ENCODE measurements at regions of chr3 and their contacts with region 1.

Region 1: DNA sequence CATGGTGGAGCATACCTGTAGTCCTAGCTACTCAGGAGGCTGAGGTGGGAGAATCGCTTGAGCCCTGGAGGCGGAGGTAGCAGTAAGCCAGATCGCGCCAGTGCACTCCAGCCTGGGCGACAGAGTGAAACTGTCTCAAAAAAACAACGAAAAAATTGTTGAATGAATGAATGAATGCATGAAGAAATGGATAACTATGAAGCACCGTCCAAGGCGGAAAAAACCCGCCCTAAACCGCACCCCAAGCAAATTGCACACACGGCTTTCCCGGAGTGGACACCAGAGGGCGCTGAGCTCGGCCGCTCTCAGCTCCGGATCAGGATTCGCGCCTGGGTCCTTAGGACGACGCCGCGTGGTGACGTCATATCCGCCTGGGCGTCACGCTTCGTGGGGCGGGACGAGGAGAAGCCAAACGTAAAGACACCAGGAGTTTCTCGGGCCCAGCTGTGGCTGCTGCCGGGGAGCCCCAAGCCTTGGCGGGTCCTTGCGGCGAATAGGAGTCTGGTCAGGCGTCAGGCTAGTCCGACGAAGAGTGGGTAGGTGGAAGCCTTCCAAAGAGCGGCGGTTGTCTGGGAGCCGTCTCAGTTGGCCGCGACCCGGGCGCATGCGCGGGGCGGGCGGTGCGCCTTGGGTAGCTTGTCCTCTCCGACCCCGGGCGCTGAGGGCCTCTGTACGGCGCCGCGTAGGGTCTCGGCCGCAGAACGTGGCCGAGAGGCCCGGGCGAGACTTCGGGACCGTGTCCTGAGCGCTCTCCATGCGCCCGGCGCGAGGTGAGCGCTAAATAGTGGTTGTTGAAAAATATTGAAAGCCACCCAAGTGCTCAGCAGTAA is at the starts of genes HTD2 and RPP14:
- DNase-seq: peak; percentile 97 to 100 (median 99)
- ATAC-seq: peak; percentile 89
- H3K4me3 ChIP-seq: peak within 1 kb of the TSS; percentile 85 to 99
- H3K4me3 Mint-ChIP-seq: peak within 1 kb of the TSS; percentile 97
- H3K27ac ChIP-seq: peak within 1 kb of the TSS; percentile 91 to 100
- H3K27ac Mint-ChIP-seq: peak within 1 kb of the TSS; percentile 99
- H3K4me1 ChIP-seq: peaks cover 18% of the 10 kb centered on the region
- H3K4me1 Mint-ChIP-seq: peaks cover 44% of the 10 kb centered on the region
- H3K27me3 ChIP-seq: no peaks in the 10 kb centered on the region
- H3K27me3 Mint-ChIP-seq: peaks cover 14% of the 10 kb centered on the region
- CTCF ChIP-seq: peak; percentile 93
- total RNA-seq, gene HTD2: 6.4 to 8.9 TPM
- total RNA-seq, gene RPP14: 18.3 to 20.4 TPM

Region 2: GRCh38 chr3:57597122-57597923 is 708.8 kb before region 1 on chr3 and contains the start of gene ARF4:
- CTCF ChIA-PET with region 1: no interaction called
- POLR2A ChIA-PET with region 1: interaction called, 5 read pairs
- intact Hi-C with region 1: loop called in 1 of 2 experiments (anchors 1 kb)
- DNase-seq: peak; percentile 98 to 100 (median 99)
- ATAC-seq: peak; percentile 87
- H3K4me3 ChIP-seq: peak within 1 kb of the TSS; percentile 92 to 95
- H3K4me3 Mint-ChIP-seq: peak within 1 kb of the TSS; percentile 99
- H3K27ac ChIP-seq: peak within 1 kb of the TSS; percentile 93 to 95
- H3K27ac Mint-ChIP-seq: peak within 1 kb of the TSS; percentile 100
- H3K4me1 ChIP-seq: peaks cover 42% of the 10 kb centered on the region
- H3K4me1 Mint-ChIP-seq: peaks cover 58% of the 10 kb centered on the region
- H3K27me3 ChIP-seq: no peaks in the 10 kb centered on the region
- H3K27me3 Mint-ChIP-seq: no peaks in the 10 kb centered on the region
- CTCF ChIP-seq: no peak
- total RNA-seq, gene ARF4: 72.7 to 73.5 TPM

Region 3: DNA sequence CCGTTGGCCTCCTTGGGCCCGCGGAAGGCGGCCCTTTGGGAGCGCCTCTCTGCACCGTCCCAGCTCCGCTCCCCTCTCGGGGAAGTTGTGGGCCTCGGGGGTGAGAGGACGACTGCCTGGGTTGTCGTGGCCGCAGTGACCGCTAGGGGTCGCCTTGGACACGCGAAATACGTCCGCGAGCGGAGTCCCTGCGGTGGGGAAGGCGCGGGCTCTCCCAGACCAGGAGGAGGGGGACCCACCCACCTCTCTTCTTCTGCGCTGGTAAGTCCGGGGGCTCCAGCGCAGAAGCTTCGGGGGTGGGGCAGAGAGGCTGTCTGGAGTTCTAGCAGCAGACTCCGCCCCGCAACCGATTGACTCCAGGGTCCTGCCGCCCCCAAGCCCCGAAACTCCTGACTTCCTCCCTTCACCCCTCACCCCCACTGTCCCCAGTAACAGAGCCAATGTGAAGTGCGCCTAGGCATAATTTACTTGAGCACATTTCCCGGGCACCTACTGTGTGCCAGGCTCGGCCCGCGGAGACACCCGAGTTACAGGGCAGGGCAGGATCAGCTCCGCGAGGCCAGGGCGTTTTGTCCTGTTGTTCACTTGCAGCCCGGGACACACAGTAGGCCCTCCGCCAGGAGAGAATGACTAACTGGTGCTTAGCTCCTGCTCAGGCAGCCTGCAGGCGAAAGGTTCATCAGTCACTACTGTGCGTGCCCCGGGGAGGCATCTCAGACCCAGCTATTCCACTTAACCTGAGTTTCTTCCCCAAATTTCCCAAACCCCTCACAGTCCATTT is 128.2 kb before region 1 on chr3:
- CTCF ChIA-PET with region 1: interaction called, 4 read pairs
- POLR2A ChIA-PET with region 1: no interaction called
- intact Hi-C with region 1: loop called in 1 of 2 experiments (anchors 2 kb)
- DNase-seq: peak; percentile 74 to 95 (median 87)
- ATAC-seq: peak; percentile 94
- H3K4me3 ChIP-seq: peak overlapping the region; percentile 34 to 48
- H3K4me3 Mint-ChIP-seq: peak overlapping the region; percentile 69
- H3K27ac ChIP-seq: no peak overlapping the region
- H3K27ac Mint-ChIP-seq: no peak overlapping the region
- H3K4me1 ChIP-seq: peaks cover 14% of the 10 kb centered on the region
- H3K4me1 Mint-ChIP-seq: peaks cover 13% of the 10 kb centered on the region
- H3K27me3 ChIP-seq: peaks cover 0 to 2% of the 10 kb centered on the region in 2 experiments
- H3K27me3 Mint-ChIP-seq: peaks cover 9% of the 10 kb centered on the region
- CTCF ChIP-seq: peak; percentile 79

Region 4: DNA sequence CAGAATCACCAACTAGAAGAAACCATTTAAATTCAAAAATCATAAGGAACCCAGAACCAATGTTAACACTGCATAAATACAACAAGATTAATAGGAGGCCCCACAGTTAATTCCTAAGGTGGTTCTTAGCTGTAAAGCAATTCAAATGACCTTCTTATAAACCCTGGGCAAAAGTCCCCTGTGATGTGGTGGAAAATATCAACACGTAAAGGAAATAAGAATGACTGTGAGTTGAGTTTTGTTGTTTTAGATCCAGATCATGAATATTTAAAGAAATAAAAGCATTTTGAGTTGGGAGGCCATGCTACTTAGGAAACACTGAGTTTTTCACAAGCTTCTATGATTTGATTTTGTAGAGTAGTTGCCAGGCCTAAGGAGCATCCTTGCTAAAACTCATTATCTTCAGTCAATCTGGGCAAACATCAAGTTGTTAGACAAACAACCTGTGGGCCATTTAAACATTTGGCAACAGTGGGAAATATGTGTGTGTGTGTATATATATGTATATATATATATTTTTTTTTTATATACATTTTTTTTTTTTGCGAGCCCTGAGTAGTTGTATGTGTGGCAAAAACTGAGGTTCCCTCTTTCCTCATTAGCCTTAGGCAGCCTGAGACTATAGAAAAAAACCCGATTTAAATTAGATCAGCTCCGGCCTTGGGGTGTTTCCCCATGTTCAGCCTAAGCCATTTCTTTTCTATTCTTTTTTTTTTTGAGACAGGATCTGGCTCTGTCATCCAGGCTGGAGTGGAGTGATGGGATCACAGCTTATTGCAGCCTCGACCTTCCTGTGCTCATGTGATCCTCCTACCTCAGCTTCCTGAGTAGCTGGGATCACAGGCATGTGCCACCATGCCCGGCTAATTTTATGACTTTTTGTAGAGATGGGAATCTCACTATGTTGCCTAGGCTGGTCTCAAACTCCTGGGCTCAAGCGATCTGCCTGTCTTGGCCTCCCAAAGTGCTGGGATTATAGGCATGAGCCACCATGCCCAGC is 18.6 kb after region 1 on chr3:
- CTCF ChIA-PET with region 1: interaction called, 12 read pairs
- POLR2A ChIA-PET with region 1: interaction called, 3 read pairs
- intact Hi-C with region 1: loop called in 1 of 2 experiments (anchors 1 kb)
- DNase-seq: peak in 1 of 9 experiments; percentile 26
- ATAC-seq: peak; percentile 50
- H3K4me3 ChIP-seq: no peak overlapping the region
- H3K4me3 Mint-ChIP-seq: no peak overlapping the region
- H3K27ac ChIP-seq: no peak overlapping the region
- H3K27ac Mint-ChIP-seq: peak overlapping the region; percentile 52
- H3K4me1 ChIP-seq: peaks cover 7% of the 10 kb centered on the region
- H3K4me1 Mint-ChIP-seq: peaks cover 13% of the 10 kb centered on the region
- H3K27me3 ChIP-seq: no peaks in the 10 kb centered on the region
- H3K27me3 Mint-ChIP-seq: no peaks in the 10 kb centered on the region
- CTCF ChIP-seq: no peak

Region 5: GRCh38 chr3:58414538-58415197 is 108.6 kb after region 1 on chr3:
- CTCF ChIA-PET with region 1: interaction called, 16 read pairs
- POLR2A ChIA-PET with region 1: no interaction called
- intact Hi-C with region 1: loop called in 1 of 2 experiments (anchors 1 kb)
- DNase-seq: peak in 6 of 9 experiments; percentile 23 to 72 (median 42)
- ATAC-seq: peak; percentile 91
- H3K4me3 ChIP-seq: no peak overlapping the region
- H3K4me3 Mint-ChIP-seq: no peak overlapping the region
- H3K27ac ChIP-seq: no peak overlapping the region
- H3K27ac Mint-ChIP-seq: no peak overlapping the region
- H3K4me1 ChIP-seq: no peaks in the 10 kb centered on the region
- H3K4me1 Mint-ChIP-seq: no peaks in the 10 kb centered on the region
- H3K27me3 ChIP-seq: no peaks in the 10 kb centered on the region
- H3K27me3 Mint-ChIP-seq: no peaks in the 10 kb centered on the region
- CTCF ChIP-seq: peak; percentile 60

Region 6: DNA sequence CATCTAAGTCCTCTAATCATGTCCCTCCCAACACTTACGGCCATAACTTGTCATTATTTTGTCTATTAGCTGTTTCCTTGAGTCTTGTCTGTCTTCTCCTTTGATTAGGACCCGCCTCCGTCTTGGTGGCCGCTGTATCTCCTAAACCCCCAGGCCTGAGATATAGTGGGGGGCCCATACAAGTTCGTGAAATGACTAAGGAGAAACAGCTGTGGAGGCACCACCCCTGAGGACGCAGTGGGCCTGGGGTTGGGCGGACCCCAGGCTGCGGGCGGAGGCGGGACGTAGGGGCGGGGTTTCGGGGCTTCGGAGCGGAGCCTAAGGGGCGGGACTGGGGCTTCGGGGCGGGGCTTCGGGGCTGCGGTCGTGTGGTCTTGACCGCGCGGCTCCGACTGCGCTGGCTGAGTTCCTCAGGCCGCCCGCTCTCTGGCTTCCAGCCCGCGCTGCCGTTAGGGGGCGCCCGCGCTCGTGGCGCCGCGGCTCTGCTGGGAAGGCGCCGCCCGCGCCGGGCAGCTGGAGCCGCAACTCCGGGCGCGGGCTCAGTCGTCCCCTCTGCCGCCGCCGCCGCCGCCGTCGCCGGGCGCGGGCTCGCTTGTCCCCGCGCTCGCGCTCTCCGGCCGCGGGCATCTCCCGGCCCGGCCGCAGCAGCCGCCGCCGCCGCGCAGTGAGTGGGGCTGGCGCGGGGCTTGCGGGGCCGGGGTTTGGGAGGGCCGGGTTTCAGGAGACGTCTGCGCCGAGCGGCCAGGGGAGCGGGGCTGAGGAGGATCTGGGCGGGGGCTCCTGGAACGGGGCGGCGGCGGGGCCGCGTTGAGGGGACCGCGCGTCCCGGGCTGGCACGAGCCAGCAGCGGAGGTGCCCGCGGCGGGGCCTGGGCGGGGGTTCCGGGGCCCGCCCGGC is 185.7 kb after region 1 on chr3 and contains the start of gene KCTD6:
- CTCF ChIA-PET with region 1: interaction called, 30 read pairs
- POLR2A ChIA-PET with region 1: interaction called, 17 read pairs
- intact Hi-C with region 1: loop called (anchors 1 kb)
- DNase-seq: peak; percentile 74 to 93 (median 85)
- ATAC-seq: peak; percentile 81
- H3K4me3 ChIP-seq: peak within 1 kb of the TSS; percentile 72 to 88
- H3K4me3 Mint-ChIP-seq: peak within 1 kb of the TSS; percentile 93
- H3K27ac ChIP-seq: peak within 1 kb of the TSS; percentile 50 to 54
- H3K27ac Mint-ChIP-seq: peak within 1 kb of the TSS; percentile 91
- H3K4me1 ChIP-seq: peaks cover 45% of the 10 kb centered on the region
- H3K4me1 Mint-ChIP-seq: peaks cover 54% of the 10 kb centered on the region
- H3K27me3 ChIP-seq: no peaks in the 10 kb centered on the region
- H3K27me3 Mint-ChIP-seq: no peaks in the 10 kb centered on the region
- CTCF ChIP-seq: peak; percentile 33
- total RNA-seq, gene KCTD6: 4.2 to 4.5 TPM

Region 7: GRCh38 chr3:58630076-58630709 is 324.1 kb after region 1 on chr3:
- CTCF ChIA-PET with region 1: interaction called, 10 read pairs
- POLR2A ChIA-PET with region 1: interaction called, 3 read pairs
- intact Hi-C with region 1: loop called in 1 of 2 experiments (anchors 5 kb)
- DNase-seq: peak; percentile 16 to 72 (median 57)
- ATAC-seq: peak; percentile 56
- H3K4me3 ChIP-seq: no peak overlapping the region
- H3K4me3 Mint-ChIP-seq: no peak overlapping the region
- H3K27ac ChIP-seq: no peak overlapping the region
- H3K27ac Mint-ChIP-seq: no peak overlapping the region
- H3K4me1 ChIP-seq: no peaks in the 10 kb centered on the region
- H3K4me1 Mint-ChIP-seq: no peaks in the 10 kb centered on the region
- H3K27me3 ChIP-seq: no peaks in the 10 kb centered on the region
- H3K27me3 Mint-ChIP-seq: peaks cover 12% of the 10 kb centered on the region
- CTCF ChIP-seq: peak; percentile 74